ENCODE measurements at regions of chr5 and their contacts with region 1.

Region 1: GRCh38 chr5:1167728-1168709 is 33.4 kb upstream of the SLC6A19 start:
- DNase-seq: peak in 1 of 2 experiments; percentile 82
- H3K4me3 ChIP-seq: peak overlapping the region in 2 of 4 experiments; percentile 15 to 46; a peak in 2 of 8 replicates
- H3K27ac ChIP-seq: no peak overlapping the region
- H3K4me1 ChIP-seq: peaks cover 0 to 5% (median 2%) of the 10 kb centered on the region in 4 experiments; a peak in 2 of 7 replicates
- H3K27me3 ChIP-seq: no peaks in the 10 kb centered on the region; a peak in 1 of 7 replicates
- CTCF ChIP-seq: peak in 2 of 3 experiments; percentile 92 to 94; a peak in 3 of 4 replicates
- EP300 ChIP-seq: no peak
- POLR2A ChIP-seq: no peak
- RAD21 ChIP-seq: peak; percentile 93 to 96

Region 2: GRCh38 chr5:932628-933250 is 235.3 kb before region 1 on chr5:
- CTCF ChIA-PET with region 1: interaction called, 20 read pairs
- POLR2A ChIA-PET with region 1: no interaction called
- DNase-seq: no peak
- H3K4me3 ChIP-seq: no peak overlapping the region
- H3K27ac ChIP-seq: no peak overlapping the region
- H3K4me1 ChIP-seq: no peaks in the 10 kb centered on the region
- H3K27me3 ChIP-seq: no peaks in the 10 kb centered on the region
- CTCF ChIP-seq: no peak
- EP300 ChIP-seq: no peak
- POLR2A ChIP-seq: no peak
- RAD21 ChIP-seq: no peak

Region 3: GRCh38 chr5:1021136-1021968 is 146.7 kb before region 1 on chr5:
- CTCF ChIA-PET with region 1: interaction called, 10 read pairs
- POLR2A ChIA-PET with region 1: no interaction called
- DNase-seq: no peak
- H3K4me3 ChIP-seq: no peak overlapping the region
- H3K27ac ChIP-seq: no peak overlapping the region
- H3K4me1 ChIP-seq: peaks cover 0 to 12% (median 5%) of the 10 kb centered on the region in 4 experiments; a peak in 4 of 7 replicates
- H3K27me3 ChIP-seq: no peaks in the 10 kb centered on the region
- CTCF ChIP-seq: no peak
- EP300 ChIP-seq: no peak
- POLR2A ChIP-seq: no peak
- RAD21 ChIP-seq: no peak

Region 4: GRCh38 chr5:1101961-1102713 is 65.9 kb before region 1 on chr5:
- CTCF ChIA-PET with region 1: interaction called, 11 read pairs
- POLR2A ChIA-PET with region 1: no interaction called
- DNase-seq: no peak
- H3K4me3 ChIP-seq: no peak overlapping the region
- H3K27ac ChIP-seq: no peak overlapping the region; the same call in 1 of the 2 replicates
- H3K4me1 ChIP-seq: peaks cover 5 to 79% (median 63%) of the 10 kb centered on the region in 4 experiments
- H3K27me3 ChIP-seq: no peaks in the 10 kb centered on the region
- CTCF ChIP-seq: no peak
- EP300 ChIP-seq: no peak
- POLR2A ChIP-seq: no peak
- RAD21 ChIP-seq: no peak

Region 5: DNA sequence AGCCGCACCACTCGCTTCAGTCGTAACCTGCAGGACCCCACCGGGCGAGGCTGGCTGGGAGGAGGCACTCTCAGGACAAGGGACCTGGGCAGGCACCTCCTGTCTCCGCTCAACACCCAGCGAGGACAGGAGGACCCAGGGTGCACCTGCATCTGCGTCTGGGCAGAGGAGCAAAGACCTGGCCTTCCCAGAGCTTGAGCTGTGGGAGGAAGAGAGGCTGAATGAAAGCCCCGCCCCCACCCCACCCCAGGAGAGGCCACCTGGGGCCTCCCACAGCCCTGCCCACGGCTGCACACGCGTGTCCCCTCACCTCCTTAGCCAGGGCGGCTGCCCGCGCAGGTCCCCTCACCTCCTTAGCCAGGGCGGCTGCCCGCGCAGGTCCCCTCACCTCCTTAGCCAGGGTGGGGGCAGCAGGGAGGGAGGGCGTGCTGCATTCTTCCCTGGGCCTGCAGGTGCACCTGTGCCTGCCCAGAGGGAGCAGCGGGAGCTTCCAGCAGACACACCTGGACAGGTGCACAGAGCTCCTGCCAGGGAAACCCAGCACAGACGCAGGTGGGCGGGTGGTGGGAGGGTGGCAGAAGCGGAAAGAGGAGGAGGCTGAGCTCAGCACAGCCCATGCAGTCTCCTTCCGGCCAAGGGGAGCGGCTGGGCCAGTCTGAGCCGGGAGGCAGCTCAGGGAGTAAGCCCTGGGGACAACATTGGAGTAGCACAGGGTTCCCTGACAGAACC is 37.6 kb before region 1 on chr5:
- CTCF ChIA-PET with region 1: interaction called, 16 read pairs
- POLR2A ChIA-PET with region 1: no interaction called
- DNase-seq: no peak
- H3K4me3 ChIP-seq: no peak overlapping the region
- H3K27ac ChIP-seq: no peak overlapping the region
- H3K4me1 ChIP-seq: peaks cover 0 to 9% (median under 1%) of the 10 kb centered on the region in 4 experiments; a peak in 2 of 7 replicates
- H3K27me3 ChIP-seq: no peaks in the 10 kb centered on the region
- CTCF ChIP-seq: no peak
- EP300 ChIP-seq: no peak
- POLR2A ChIP-seq: no peak
- RAD21 ChIP-seq: no peak

Region 6: GRCh38 chr5:1204693-1205242 is 36.7 kb after region 1 on chr5:
- CTCF ChIA-PET with region 1: interaction called, 13 read pairs
- POLR2A ChIA-PET with region 1: no interaction called
- DNase-seq: no peak
- H3K4me3 ChIP-seq: no peak overlapping the region
- H3K27ac ChIP-seq: no peak overlapping the region
- H3K4me1 ChIP-seq: peaks cover 0 to 3% (median 0%) of the 10 kb centered on the region in 4 experiments; a peak in 1 of 7 replicates
- H3K27me3 ChIP-seq: no peaks in the 10 kb centered on the region; a peak in 1 of 7 replicates
- CTCF ChIP-seq: peak in 1 of 3 experiments; percentile 17; a peak in 1 of 4 replicates
- EP300 ChIP-seq: no peak
- POLR2A ChIP-seq: no peak
- RAD21 ChIP-seq: peak; percentile 14 to 16; a peak in 2 of 4 replicates